AG04449 (cell line): ENCODE measurements at regions of chr9 and their contacts with region 1.

Region 1: GRCh38 chr9:78273761-78274160 is 23.2 kb upstream of the PSAT1 start:
- DNase-seq: peak; percentile 51
- H3K4me3 ChIP-seq: no peak overlapping the region
- CTCF ChIP-seq: no peak

Region 2: GRCh38 chr9:78097541-78097940 is 176.2 kb before region 1 on chr9:
- CTCF ChIA-PET with region 1: no interaction called
- POLR2A ChIA-PET with region 1: no interaction called
- DNase-seq: no peak
- H3K4me3 ChIP-seq: no peak overlapping the region
- CTCF ChIP-seq: no peak

Region 3: DNA sequence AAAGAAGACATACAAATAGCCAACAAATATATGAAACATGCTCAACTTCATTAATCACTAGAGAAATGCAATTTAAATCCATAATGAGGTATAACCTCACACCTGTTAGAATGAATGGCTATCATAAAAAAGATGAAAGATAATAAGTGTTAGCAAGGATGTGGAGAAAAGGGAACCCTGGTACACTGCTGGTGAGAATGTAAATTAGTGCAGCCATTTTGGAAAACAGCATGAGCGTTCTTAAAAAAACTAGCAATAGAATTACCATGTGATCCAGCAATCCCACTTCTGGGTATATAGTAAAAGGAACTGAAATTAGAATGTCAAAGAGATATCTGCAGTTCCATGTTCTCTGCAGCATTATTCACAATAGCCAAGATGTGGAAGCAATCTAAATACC is 102.1 kb before region 1 on chr9:
- CTCF ChIA-PET with region 1: no interaction called
- POLR2A ChIA-PET with region 1: no interaction called
- DNase-seq: no peak
- H3K4me3 ChIP-seq: no peak overlapping the region
- CTCF ChIP-seq: no peak

Region 4: DNA sequence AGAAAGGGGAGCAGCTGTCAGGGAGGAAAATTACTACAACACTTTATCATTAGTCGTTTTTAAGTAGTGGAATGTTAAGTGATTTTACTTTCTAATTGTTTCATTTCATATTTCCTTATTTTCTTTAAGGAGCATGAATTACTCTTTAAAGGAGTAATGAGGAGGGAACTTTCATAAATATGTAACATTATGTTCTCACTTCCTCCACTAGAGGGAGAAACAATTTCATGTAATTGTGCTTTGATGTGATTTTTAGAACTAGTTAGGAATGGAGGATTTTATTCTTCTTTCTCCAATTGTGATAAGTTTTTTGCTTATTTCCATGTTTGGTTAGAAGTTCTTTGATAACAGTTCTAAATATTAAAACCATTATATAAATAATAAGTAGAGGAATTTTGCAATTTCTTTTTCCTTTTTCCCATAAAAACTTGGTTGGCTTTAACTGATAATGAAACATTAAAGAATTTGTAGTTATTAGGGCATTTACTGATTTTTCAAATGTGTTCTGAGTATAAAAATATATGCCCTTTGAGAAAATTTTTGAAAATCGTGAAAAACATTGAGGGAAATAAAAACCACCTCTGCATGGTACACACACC is 12.3 kb before region 1 on chr9:
- CTCF ChIA-PET with region 1: interaction called, 24 read pairs
- POLR2A ChIA-PET with region 1: no interaction called
- DNase-seq: no peak
- H3K4me3 ChIP-seq: no peak overlapping the region
- CTCF ChIP-seq: peak; percentile 42

Region 5: DNA sequence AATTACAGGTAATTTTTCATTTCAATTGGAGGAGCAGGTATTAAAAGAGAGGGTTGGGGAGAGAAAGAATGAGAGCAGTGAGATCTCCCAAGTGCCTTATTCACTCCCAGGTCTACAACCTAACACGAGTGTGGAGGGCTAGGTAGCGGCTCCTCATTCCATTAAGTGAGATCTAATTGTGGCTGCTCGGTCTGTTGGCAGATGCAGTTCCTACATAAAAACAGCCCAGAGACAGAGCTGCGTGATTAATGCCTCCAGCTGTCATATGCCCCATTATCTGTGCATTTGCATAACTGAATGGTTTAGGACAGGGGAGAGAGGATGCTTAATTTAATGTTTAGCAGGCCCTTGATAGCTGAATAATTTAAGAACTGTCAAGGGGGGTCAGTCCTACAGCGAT is 123.7 kb after region 1 on chr9:
- CTCF ChIA-PET with region 1: no interaction called
- POLR2A ChIA-PET with region 1: no interaction called
- DNase-seq: no peak
- H3K4me3 ChIP-seq: no peak overlapping the region
- CTCF ChIP-seq: no peak

Region 6: GRCh38 chr9:78439190-78439865 is 165.6 kb after region 1 on chr9:
- CTCF ChIA-PET with region 1: no interaction called
- POLR2A ChIA-PET with region 1: no interaction called
- DNase-seq: peak; percentile 87
- H3K4me3 ChIP-seq: peak overlapping the region; percentile 41
- CTCF ChIP-seq: peak; percentile 88